Activated naive CD4-positive, alpha-beta T cell treated with anti-CD3 and anti-CD28 coated beads for 36 hours (primary cell): ENCODE measurements at regions of chr9 and their contacts with region 1.

Region 1: DNA sequence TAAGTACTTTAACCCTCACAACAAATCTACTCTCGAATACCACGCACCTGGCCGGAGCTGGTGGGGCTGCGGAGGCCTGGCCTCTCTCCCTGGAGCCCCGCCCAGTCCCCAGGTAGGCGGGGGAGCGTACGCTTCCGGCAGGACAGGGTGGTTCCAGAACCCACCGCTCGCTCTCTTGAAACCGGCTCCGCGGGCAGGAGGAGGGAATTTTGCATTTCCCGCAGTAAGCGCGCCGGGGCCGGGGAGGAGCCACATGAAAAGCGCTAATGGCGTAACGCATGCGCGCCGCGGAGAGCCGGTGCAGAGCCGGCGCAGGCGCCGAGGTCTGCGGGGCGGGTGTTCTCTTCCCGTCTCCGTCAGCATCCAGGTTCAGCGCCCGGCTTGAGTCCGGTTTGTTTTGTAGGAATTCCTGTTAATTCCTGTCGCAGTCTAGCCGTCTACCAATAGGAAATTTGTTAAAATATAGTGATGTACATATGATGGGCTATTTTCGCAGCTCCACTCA is 20.8 kb downstream of the CAVIN4 start:
- DNase-seq: peak; percentile 83
- H3K4me3 Mint-ChIP-seq: peak overlapping the region; percentile 72
- H3K27ac Mint-ChIP-seq: peak overlapping the region; percentile 58
- H3K4me1 Mint-ChIP-seq: peaks cover 15% of the 10 kb centered on the region
- H3K27me3 Mint-ChIP-seq: no peaks in the 10 kb centered on the region

Region 2: GRCh38 chr9:99266255-99267023 is 1332.3 kb before region 1 on chr9:
- CTCF ChIA-PET with region 1: interaction called, 3 read pairs
- intact Hi-C with region 1: loop called (anchors 5 kb)
- DNase-seq: peak; percentile 82
- H3K4me3 Mint-ChIP-seq: peak overlapping the region; percentile 19
- H3K27ac Mint-ChIP-seq: no peak overlapping the region
- H3K4me1 Mint-ChIP-seq: peaks cover 17% of the 10 kb centered on the region
- H3K27me3 Mint-ChIP-seq: peaks cover 1% of the 10 kb centered on the region

Region 3: DNA sequence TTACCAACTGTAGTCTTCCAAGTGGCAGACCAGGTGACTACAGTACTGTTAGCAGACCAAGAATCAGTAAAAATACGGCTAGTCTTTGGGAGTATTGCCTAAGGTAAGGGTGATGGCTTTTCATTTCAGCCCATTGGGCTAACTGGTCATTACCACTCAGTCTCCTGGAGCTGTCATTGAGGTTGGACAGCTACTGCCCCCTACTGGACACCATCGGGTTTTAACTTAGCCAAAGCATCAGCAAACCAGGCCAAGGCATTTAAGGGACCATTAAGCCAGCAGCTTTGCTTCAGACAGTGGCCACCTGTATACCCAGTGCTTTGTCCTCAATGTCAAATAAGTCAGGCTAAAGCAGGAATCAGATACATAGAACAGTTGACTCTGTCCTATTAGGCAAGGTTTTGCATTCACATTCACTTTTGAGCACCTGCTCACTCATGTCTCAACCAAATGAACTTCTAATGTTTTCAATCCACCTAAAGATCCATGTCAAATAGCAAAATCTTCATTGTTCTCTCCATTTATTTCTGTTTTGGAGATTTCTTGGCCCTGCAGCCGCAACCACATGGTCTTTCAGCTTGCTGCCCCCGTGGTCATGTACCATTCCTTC is 382.4 kb before region 1 on chr9:
- CTCF ChIA-PET with region 1: no interaction called
- intact Hi-C with region 1: loop called (anchors 5 kb)
- DNase-seq: peak; percentile 83
- H3K4me3 Mint-ChIP-seq: no peak overlapping the region
- H3K27ac Mint-ChIP-seq: no peak overlapping the region
- H3K4me1 Mint-ChIP-seq: no peaks in the 10 kb centered on the region
- H3K27me3 Mint-ChIP-seq: no peaks in the 10 kb centered on the region

Region 4: DNA sequence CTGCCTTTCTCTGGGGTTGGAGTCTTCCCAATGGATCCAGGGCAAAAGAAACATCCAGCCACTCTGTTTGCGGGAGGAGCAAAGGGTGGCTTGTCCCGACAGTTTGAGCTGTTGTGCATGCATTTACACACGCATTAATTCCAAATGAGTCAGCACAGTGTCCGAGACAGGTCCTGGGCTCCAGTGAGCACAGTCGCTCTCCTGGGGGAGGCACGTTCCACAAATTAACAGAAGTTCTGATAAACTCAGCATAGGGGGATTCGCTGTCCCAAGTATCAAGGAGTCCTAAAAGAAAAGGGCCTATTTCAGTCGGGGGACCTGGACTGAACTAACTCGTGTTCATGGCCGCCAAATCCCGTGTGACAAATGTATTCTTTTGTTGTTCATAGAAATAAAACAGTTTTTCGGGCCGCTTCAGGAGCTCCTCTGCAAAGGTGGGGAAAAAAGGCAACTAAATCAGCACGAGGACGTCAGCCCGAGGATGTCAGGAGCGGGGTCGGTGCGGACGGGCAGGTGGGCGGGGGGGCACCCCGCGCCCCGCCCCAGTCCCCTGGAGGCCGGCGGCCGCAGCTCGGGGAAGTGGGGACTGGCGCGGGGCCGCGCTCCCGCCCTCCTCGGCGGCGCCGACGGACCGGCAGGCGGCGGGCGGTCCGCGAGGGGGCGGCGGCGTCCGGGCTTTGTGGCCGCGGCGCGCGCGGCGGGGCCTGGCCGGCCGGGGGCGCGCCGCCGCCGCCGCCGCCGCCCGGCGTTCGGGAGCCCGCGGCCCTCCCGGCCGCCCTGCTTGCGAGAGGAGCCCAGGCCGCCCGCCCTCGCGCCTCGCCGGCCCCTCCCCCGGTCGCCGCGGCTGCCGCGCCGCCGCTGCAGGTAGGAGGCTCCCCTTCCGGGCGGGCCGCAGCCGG is 171.9 kb before region 1 on chr9 and contains the start of gene MSANTD3:
- CTCF ChIA-PET with region 1: interaction called, 4 read pairs
- intact Hi-C with region 1: loop called (anchors 1 kb)
- DNase-seq: peak; percentile 52
- H3K4me3 Mint-ChIP-seq: peak within 1 kb of the TSS; percentile 91
- H3K27ac Mint-ChIP-seq: peak within 1 kb of the TSS; percentile 82
- H3K4me1 Mint-ChIP-seq: peaks cover 30% of the 10 kb centered on the region
- H3K27me3 Mint-ChIP-seq: no peaks in the 10 kb centered on the region
- total RNA-seq, gene MSANTD3: 10.4 to 11.5 TPM

Region 5: GRCh38 chr9:100714372-100715099 is 115.8 kb after region 1 on chr9:
- CTCF ChIA-PET with region 1: interaction called, 3 read pairs
- intact Hi-C with region 1: loop called (anchors 5 kb)
- DNase-seq: peak; percentile 71
- H3K4me3 Mint-ChIP-seq: no peak overlapping the region
- H3K27ac Mint-ChIP-seq: no peak overlapping the region
- H3K4me1 Mint-ChIP-seq: no peaks in the 10 kb centered on the region
- H3K27me3 Mint-ChIP-seq: peaks cover 7% of the 10 kb centered on the region

Region 6: DNA sequence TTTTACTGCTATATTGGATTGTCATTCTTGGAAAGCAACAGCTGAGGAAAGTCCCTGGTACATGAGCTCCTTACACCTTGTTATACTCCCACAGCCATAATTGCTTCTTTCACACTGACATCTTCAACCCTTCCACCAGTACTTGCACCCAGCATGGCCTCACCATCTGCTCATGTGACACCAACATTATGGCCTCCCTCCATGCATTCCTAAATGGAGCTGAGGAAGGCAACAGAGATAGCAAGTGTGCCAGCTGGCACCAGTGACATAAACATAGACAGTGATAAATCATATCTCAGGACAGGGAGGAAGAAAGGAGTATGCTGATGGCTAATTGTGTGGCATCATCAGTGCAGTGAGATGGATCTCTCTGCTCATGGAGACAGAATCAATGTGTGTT is 666.6 kb after region 1 on chr9:
- CTCF ChIA-PET with region 1: no interaction called
- intact Hi-C with region 1: no loop called
- DNase-seq: no peak
- H3K4me3 Mint-ChIP-seq: no peak overlapping the region
- H3K27ac Mint-ChIP-seq: no peak overlapping the region
- H3K4me1 Mint-ChIP-seq: no peaks in the 10 kb centered on the region
- H3K27me3 Mint-ChIP-seq: peaks cover 2% of the 10 kb centered on the region

Region 7: GRCh38 chr9:101398068-101398929 is 799.6 kb after region 1 on chr9 and contains the starts of genes MRPL50 and ZNF189:
- CTCF ChIA-PET with region 1: no interaction called
- intact Hi-C with region 1: loop called (anchors 5 kb)
- DNase-seq: peak; percentile 99
- H3K4me3 Mint-ChIP-seq: peak within 1 kb of the TSS; percentile 92
- H3K27ac Mint-ChIP-seq: peak within 1 kb of the TSS; percentile 97
- H3K4me1 Mint-ChIP-seq: peaks cover 66% of the 10 kb centered on the region
- H3K27me3 Mint-ChIP-seq: no peaks in the 10 kb centered on the region
- total RNA-seq, gene MRPL50: 13.2 to 14.3 TPM
- total RNA-seq, gene ZNF189: 5.5 to 5.7 TPM